IMR-90 (cell line): ENCODE measurements at regions of chr11 and their contacts with region 1.

Region 1: DNA sequence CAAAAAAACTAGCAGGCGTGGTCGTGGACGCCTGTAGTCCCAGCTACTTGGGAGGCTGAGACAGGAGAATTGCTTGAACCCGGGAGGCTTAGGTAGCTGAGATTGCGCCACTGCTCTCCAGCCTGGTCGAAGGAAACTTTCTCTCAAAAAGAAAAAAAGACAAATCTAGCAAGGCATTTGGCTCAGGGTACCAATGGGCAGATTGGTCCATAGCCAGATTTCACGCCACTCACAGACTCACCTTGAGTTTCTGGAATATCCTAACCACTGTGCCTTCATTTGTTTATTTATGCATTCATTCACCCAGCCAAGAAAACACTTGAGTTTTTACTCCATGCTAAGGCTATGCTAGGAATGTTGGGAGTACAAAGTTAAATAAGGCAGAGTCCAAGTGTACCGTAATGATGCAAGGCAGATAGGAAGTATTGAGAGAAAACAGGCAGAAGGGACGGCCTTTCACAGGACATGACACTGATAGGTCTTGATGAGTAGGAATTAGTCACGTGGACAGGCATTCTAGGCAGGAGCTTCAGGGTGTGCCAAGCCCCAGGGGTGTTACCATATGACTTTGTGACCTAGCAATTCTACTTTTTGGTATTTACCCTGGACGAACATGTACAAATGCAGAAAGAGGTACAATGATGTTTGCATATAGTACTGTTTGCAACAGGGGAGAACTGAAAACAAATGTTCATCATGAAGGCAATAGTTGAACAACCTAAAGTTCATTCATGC is 3.0 kb upstream of the PACSIN3 start:
- DNase-seq: peak; percentile 86
- ATAC-seq: peak; percentile 10
- H3K4me3 ChIP-seq: no peak overlapping the region
- H3K27ac ChIP-seq: no peak overlapping the region
- H3K4me1 ChIP-seq: peaks cover 18% of the 10 kb centered on the region
- H3K27me3 ChIP-seq: no peaks in the 10 kb centered on the region
- CTCF ChIP-seq: no peak
- POLR2A ChIP-seq: no peak
- RAD21 ChIP-seq: no peak

Region 2: DNA sequence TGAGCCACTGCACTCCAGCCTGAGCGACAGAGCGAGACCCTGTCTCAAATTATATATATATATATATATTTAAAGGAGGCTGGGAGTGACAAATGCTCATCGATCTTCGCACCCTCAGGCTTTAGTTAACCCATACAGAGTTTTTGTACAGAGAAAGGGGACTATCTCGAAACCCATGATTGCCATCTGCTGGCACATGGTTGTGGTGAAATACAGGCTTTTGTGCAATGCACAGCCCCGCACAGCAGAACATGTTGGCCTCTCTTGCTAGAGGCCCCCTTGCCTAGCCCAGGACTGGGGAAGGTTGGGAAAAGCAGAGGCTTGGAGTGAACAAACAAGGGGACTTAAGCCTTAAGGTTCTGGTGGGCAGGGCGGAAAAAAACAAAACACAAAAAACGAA is 159.6 kb after region 1 on chr11:
- CTCF ChIA-PET with region 1: no interaction called
- POLR2A ChIA-PET with region 1: no interaction called
- dilution Hi-C with region 1: no loop called
- in situ Hi-C with region 1: loop called (anchors 5 kb)
- intact Hi-C with region 1: no loop called
- DNase-seq: peak; percentile 22
- ATAC-seq: peak; percentile 75
- H3K4me3 ChIP-seq: no peak overlapping the region
- H3K27ac ChIP-seq: no peak overlapping the region
- H3K4me1 ChIP-seq: no peaks in the 10 kb centered on the region
- H3K27me3 ChIP-seq: peaks cover 28% of the 10 kb centered on the region
- CTCF ChIP-seq: peak; percentile 14; the same call in 1 of the 2 replicates
- POLR2A ChIP-seq: no peak
- RAD21 ChIP-seq: peak; percentile 16; the same call in 1 of the 2 replicates

Region 3: GRCh38 chr11:47837292-47837691 is 648.0 kb after region 1 on chr11:
- CTCF ChIA-PET with region 1: no interaction called
- POLR2A ChIA-PET with region 1: no interaction called
- dilution Hi-C with region 1: no loop called
- in situ Hi-C with region 1: no loop called
- intact Hi-C with region 1: no loop called
- DNase-seq: no peak
- ATAC-seq: no peak
- H3K4me3 ChIP-seq: no peak overlapping the region
- H3K27ac ChIP-seq: no peak overlapping the region
- H3K4me1 ChIP-seq: no peaks in the 10 kb centered on the region
- H3K27me3 ChIP-seq: no peaks in the 10 kb centered on the region
- CTCF ChIP-seq: no peak
- POLR2A ChIP-seq: no peak
- RAD21 ChIP-seq: no peak